GM13976 (cell line): ENCODE measurements at regions of chr11 and their contacts with region 1.

Region 1: DNA sequence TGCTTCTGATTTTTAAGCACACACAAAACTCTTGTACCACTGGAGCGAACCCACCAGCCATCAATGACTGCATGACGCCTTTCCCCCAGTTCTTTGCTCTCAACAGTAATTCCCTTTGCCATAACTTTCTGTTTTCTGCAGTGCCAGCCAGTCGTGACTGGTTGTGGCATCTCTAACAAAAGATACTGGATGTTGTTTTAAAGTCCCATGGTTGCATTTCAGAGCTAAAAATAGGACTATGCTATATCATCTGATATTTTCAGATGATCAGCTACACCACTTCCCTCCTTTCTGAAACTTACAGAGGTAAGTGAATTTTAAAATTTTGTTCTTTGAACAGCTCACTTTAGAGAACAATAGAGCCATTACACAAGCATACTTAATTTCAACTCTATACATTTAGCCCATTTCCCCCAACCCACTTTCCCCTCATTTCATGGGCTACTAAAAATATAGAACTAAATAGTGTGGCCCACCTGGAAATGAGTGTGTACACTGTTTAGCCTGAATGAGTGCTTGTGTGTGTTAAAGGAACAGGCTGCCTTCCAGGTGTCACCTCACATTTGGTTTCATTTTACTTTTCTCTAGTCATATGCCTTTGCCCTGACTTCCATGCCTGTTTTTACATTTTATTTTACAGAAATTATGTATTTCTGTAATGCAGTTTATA is 136.9 kb upstream of the ZC3H12C start:
- DNase-seq: peak; percentile 39
- CTCF ChIP-seq: no peak

Region 2: DNA sequence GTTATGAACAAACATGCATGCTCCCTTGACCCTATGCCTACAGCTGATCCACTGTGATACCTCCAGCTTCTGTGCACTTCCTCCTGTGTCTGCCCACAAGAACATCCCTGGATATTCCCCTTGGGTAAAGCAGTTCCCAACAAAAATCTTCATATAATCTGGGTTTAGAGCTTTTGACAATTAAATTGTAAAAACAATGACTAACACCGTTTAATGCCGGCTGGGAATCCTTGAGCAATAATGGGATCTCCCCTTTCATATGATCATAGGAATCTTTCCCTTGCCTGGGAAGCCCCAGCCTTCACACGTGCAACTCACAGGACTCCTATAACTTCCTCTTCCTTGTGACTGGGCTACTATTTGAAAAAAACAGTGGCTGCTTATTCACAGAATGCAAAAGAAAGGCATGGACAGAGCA is 130.6 kb after region 1 on chr11:
- in situ Hi-C with region 1: loop called (anchors 10 kb)
- DNase-seq: no peak
- CTCF ChIP-seq: no peak

Region 3: GRCh38 chr11:110429731-110430266 is 473.5 kb after region 1 on chr11 and contains the start of gene FDX1:
- in situ Hi-C with region 1: loop called (anchors 10 kb)
- DNase-seq: peak; percentile 83
- CTCF ChIP-seq: peak; percentile 73